ENCODE measurements at regions of chr7 and their contacts with region 1.

Region 1: DNA sequence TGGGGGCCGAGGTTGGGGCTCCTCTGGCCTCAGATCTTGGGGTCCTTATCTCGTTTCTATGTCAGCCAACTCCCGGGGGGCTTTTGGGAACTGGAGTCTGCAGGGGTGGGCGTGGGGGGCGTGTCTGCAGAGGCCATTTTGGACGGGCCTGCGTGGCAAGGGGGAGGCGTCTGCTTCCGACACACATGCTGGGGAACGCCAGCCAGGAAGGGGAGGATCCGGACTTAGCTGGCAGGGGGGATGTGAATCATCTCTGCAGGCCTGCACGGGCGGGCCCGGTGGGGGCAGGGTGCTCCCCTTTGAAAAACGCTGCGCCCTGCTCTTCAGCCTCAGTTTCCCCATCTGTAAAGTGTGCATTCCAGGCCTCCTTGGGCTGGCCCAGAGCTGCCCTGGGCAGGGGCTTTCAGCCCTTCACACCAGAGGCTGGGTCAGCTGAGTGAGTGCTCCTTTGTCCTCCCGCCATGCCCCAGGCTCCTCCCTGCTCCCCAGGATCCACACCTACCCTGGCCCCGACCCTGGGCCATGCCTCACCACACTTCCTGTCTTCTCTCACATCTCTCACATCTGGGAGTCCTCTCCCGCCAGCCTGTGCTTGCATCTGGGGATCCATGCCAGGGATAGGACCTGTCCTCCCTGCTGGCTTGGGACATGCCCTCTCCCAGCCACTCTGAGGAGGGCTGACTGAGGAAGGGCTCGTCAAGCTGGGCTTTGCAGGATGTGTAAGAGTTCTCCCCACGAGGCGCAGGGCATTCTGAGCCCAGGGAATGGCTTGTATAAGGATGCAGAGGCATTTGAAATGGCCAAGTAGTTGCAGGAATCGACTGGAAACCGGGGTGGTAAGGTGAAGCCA is 172.6 kb upstream of the TNRC18 start:
- DNase-seq: no peak
- ATAC-seq: peak; percentile 55
- H3K4me3 ChIP-seq: peak overlapping the region; percentile 99
- H3K27ac ChIP-seq: peak overlapping the region; percentile 79
- H3K4me1 ChIP-seq: peaks cover 37% of the 10 kb centered on the region
- H3K27me3 ChIP-seq: no peaks in the 10 kb centered on the region
- CTCF ChIP-seq: no peak
- EP300 ChIP-seq: no peak
- POLR2A ChIP-seq: peak; percentile 43; the same call in 1 of the 2 replicates
- RAD21 ChIP-seq: no peak

Region 2: DNA sequence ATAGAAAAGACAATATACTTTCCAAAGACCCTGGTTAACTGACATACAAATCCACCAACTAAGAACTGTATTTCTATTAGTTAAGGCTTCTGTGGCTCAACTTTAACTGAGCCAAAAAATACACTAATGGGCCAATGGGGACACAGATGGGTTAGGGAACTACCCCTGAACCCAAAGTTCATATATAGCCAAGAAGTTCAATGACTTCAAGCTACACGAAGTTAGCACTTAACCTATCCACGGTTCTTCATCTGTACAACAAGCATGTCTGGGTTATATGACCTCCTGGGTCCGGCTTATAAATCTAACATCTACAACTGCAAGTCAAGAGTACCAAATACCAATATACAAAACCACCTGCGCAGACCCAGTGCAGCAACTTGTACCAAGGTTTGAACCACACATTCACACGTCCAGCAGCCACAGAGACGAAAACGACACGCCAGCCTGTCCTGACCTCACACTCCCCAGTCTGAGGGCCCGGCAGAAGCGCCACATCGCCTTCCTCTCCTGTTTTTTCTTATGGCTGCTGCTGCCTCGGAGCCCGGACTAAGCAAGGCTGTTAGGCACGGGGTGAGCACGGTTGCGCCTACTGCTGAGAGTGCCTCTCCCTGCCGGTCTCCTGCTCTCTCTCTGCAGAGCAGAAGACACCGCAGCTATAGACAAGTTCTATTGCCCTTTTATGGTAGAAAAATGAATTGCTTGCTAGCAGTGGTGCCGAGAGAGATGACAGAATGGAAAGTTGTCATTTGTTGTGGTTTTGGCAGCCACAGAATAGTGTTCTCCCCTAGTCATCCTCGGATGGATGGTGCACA is 98.8 kb after region 1 on chr7:
- CTCF ChIA-PET with region 1: interaction called, 3 read pairs
- POLR2A ChIA-PET with region 1: interaction called, 6 read pairs
- RAD21 ChIA-PET with region 1: interaction called, 11 read pairs
- SMC1A ChIA-PET with region 1: interaction called, 12 read pairs
- in situ Hi-C with region 1: no loop called
- intact Hi-C with region 1: no loop called
- DNase-seq: peak; percentile 94
- ATAC-seq: peak; percentile 67
- H3K4me3 ChIP-seq: peak overlapping the region; percentile 49
- H3K27ac ChIP-seq: peak overlapping the region; percentile 94
- H3K4me1 ChIP-seq: peaks cover 89% of the 10 kb centered on the region
- H3K27me3 ChIP-seq: no peaks in the 10 kb centered on the region
- CTCF ChIP-seq: no peak
- EP300 ChIP-seq: peak; percentile 79 to 86
- POLR2A ChIP-seq: peak; percentile 97
- RAD21 ChIP-seq: peak; percentile 17; the same call in 1 of the 2 replicates

Measured in GM12878 (cell line).